CD8-positive, alpha-beta T cell (primary cell): ENCODE measurements at regions of chr6 and their contacts with region 1.

Region 1: DNA sequence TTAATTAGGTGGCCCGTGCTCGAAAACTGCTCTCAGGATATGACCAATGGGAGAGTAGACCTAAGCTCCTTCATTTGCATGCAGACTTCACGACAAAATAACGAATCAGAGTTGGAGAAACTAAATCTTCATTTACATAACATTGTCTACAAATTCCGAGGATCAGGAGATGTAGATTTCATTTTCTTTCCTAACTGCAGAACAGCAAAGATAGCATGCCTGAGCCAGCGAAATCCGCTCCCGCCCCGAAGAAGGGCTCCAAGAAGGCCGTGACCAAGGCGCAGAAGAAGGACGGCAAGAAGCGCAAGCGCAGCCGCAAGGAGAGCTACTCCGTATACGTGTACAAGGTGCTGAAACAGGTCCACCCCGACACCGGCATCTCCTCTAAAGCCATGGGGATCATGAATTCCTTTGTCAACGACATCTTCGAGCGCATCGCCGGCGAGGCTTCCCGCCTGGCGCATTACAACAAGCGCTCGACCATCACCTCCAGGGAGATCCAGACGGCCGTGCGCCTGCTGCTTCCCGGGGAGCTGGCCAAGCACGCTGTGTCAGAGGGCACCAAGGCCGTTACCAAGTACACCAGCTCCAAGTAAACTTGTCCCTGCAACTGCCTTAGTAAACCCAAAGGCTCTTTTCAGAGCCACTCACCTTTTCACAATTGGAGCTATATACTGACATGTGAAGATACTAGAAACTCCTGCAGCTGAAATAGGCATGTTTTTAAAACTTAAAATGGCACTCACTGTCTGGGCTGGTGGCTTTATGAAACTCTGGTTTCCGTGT is 96.5 kb downstream of the HFE start:
- DNase-seq: peak in 7 of 9 experiments; percentile 33 to 90 (median 59)
- ATAC-seq: peak; percentile 88
- H3K4me3 ChIP-seq: peak overlapping the region; percentile 60 to 71
- H3K4me3 Mint-ChIP-seq: peak overlapping the region; percentile 100
- H3K27ac ChIP-seq: peak overlapping the region; percentile 61 to 76
- H3K27ac Mint-ChIP-seq: peak overlapping the region; percentile 99
- H3K4me1 ChIP-seq: peaks cover 20% of the 10 kb centered on the region
- H3K4me1 Mint-ChIP-seq: peaks cover 42% of the 10 kb centered on the region
- H3K27me3 ChIP-seq: no peaks in the 10 kb centered on the region
- H3K27me3 Mint-ChIP-seq: no peaks in the 10 kb centered on the region
- CTCF ChIP-seq: no peak

Region 2: GRCh38 chr6:24974182-24975171 is 1209.3 kb before region 1 on chr6:
- CTCF ChIA-PET with region 1: no interaction called
- POLR2A ChIA-PET with region 1: no interaction called
- intact Hi-C with region 1: no loop called
- DNase-seq: peak in 4 of 9 experiments; percentile 33 to 70 (median 42)
- ATAC-seq: peak; percentile 84
- H3K4me3 ChIP-seq: no peak overlapping the region
- H3K4me3 Mint-ChIP-seq: peak overlapping the region; percentile 13
- H3K27ac ChIP-seq: peak overlapping the region in 1 of 2 experiments; percentile 73
- H3K27ac Mint-ChIP-seq: peak overlapping the region; percentile 89
- H3K4me1 ChIP-seq: peaks cover 39% of the 10 kb centered on the region
- H3K4me1 Mint-ChIP-seq: peaks cover 65% of the 10 kb centered on the region
- H3K27me3 ChIP-seq: no peaks in the 10 kb centered on the region
- H3K27me3 Mint-ChIP-seq: no peaks in the 10 kb centered on the region
- CTCF ChIP-seq: no peak

Region 3: DNA sequence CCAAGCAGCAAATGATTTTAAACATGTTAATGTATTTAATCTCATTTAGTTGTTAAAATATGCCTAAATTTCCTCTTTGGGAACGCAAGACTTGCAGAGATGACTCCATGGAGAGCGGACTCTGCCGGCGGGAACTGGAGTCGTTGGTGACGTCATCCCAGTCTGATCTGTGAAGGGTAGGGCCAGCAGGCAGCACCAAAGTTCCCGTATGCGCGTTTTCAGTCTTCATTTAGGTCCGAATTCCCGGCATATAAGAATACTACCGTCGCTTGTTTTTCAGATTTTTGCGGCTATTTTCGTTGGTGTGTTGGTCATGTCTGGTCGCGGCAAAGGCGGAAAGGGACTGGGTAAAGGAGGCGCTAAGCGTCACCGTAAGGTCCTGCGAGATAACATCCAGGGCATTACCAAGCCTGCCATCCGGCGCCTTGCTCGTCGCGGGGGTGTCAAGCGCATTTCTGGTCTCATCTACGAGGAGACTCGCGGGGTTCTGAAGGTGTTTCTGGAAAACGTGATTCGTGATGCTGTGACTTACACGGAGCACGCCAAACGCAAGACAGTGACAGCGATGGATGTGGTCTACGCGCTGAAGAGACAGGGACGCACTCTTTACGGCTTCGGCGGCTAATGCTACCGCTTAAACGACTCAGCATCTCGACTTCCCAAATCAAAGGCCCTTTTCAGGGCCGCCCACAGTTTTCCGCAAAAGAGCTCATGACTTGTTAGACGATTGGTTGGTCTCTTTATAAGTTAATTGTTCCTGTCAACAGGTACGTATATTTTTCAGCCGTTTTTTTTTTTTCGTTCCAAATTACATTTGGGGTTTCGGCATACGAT is 20.8 kb after region 1 on chr6:
- CTCF ChIA-PET with region 1: interaction called, 40 read pairs
- POLR2A ChIA-PET with region 1: interaction called, 604 read pairs
- intact Hi-C with region 1: no loop called
- DNase-seq: peak; percentile 75 to 98 (median 84)
- ATAC-seq: peak; percentile 74
- H3K4me3 ChIP-seq: peak overlapping the region; percentile 54 to 70
- H3K4me3 Mint-ChIP-seq: no peak overlapping the region
- H3K27ac ChIP-seq: peak overlapping the region; percentile 91
- H3K27ac Mint-ChIP-seq: no peak overlapping the region
- H3K4me1 ChIP-seq: peaks cover 31% of the 10 kb centered on the region
- H3K4me1 Mint-ChIP-seq: peaks cover 23% of the 10 kb centered on the region
- H3K27me3 ChIP-seq: no peaks in the 10 kb centered on the region
- H3K27me3 Mint-ChIP-seq: no peaks in the 10 kb centered on the region
- CTCF ChIP-seq: no peak

Region 4: GRCh38 chr6:26322645-26323482 is 139.1 kb after region 1 on chr6:
- CTCF ChIA-PET with region 1: no interaction called
- POLR2A ChIA-PET with region 1: no interaction called
- intact Hi-C with region 1: loop called in 1 of 2 experiments (anchors 5 kb)
- DNase-seq: peak in 8 of 9 experiments; percentile 32 to 86 (median 58)
- ATAC-seq: peak; percentile 65
- H3K4me3 ChIP-seq: peak overlapping the region; percentile 55 to 64
- H3K4me3 Mint-ChIP-seq: peak overlapping the region; percentile 88
- H3K27ac ChIP-seq: no peak overlapping the region
- H3K27ac Mint-ChIP-seq: peak overlapping the region; percentile 90
- H3K4me1 ChIP-seq: peaks cover 5% of the 10 kb centered on the region
- H3K4me1 Mint-ChIP-seq: peaks cover 24% of the 10 kb centered on the region
- H3K27me3 ChIP-seq: peaks cover 0 to 2% of the 10 kb centered on the region in 2 experiments
- H3K27me3 Mint-ChIP-seq: peaks cover 15% of the 10 kb centered on the region
- CTCF ChIP-seq: no peak